Activated naive CD4-positive, alpha-beta T cell treated with anti-CD3 and anti-CD28 coated beads for 36 hours (primary cell): ENCODE measurements at regions of chr2 and their contacts with region 1.

Region 1: DNA sequence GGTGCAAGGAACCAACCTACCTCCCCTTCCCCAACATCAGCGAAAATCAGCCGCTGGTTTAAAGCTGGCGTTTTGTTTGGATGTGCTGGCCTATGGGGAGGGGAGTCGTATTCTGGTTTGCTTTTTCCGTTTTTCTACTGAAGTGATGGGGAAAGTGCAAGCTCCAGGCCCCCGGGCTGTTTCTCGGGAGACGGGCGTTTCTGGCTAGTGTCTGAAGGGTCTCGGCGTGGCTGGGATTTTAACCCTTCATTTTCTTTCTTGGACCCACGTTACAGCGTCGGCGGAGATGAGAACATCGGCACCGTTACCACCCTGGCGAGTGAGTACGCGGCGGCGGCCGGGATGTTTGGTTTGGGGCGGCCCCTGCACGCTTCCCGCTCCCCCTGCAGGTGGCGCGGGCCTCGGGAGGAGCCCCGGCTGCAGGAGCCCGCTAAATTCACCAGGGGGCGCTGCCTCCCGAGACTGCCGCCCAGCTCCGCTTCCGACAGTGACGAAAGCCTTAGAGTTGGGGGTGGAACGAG is 70.7 kb downstream of the PLB1 start:
- DNase-seq: peak; percentile 93
- H3K4me3 Mint-ChIP-seq: peak overlapping the region; percentile 83
- H3K27ac Mint-ChIP-seq: peak overlapping the region; percentile 71
- H3K4me1 Mint-ChIP-seq: peaks cover 8% of the 10 kb centered on the region
- H3K27me3 Mint-ChIP-seq: no peaks in the 10 kb centered on the region

Region 2: DNA sequence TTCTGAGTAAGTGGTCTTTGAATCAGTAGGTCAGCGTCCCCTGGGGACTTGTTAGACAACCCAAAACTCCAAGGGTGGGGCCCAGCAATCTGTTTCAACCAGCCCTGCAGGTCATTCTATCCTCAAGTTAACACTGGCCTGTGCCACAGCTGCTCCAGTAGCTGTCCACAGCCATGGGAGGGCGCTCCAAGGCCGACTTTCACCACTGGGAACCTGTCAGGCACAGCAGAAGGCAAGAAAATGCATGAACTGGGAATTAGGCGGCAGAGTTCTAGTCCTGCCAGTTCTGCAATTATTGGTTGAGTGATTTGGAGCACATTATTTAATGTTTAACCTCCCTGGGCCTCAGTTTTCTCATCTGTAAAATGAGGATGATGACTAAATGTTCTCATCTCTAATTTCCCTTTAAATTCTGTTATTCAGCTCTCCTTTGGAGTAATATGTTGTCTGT is 812.4 kb before region 1 on chr2:
- CTCF ChIA-PET with region 1: no interaction called
- intact Hi-C with region 1: loop called (anchors 10 kb)
- DNase-seq: peak; percentile 92
- H3K4me3 Mint-ChIP-seq: no peak overlapping the region
- H3K27ac Mint-ChIP-seq: no peak overlapping the region
- H3K4me1 Mint-ChIP-seq: no peaks in the 10 kb centered on the region
- H3K27me3 Mint-ChIP-seq: peaks cover 2% of the 10 kb centered on the region

Region 3: GRCh38 chr2:28463893-28464292 is 102.7 kb before region 1 on chr2:
- CTCF ChIA-PET with region 1: no interaction called
- intact Hi-C with region 1: no loop called
- DNase-seq: no peak
- H3K4me3 Mint-ChIP-seq: no peak overlapping the region
- H3K27ac Mint-ChIP-seq: no peak overlapping the region
- H3K4me1 Mint-ChIP-seq: peaks cover 18% of the 10 kb centered on the region
- H3K27me3 Mint-ChIP-seq: peaks cover 7% of the 10 kb centered on the region

Region 4: GRCh38 chr2:28481905-28482304 is 84.7 kb before region 1 on chr2:
- CTCF ChIA-PET with region 1: no interaction called
- intact Hi-C with region 1: no loop called
- DNase-seq: no peak
- H3K4me3 Mint-ChIP-seq: no peak overlapping the region
- H3K27ac Mint-ChIP-seq: no peak overlapping the region
- H3K4me1 Mint-ChIP-seq: no peaks in the 10 kb centered on the region
- H3K27me3 Mint-ChIP-seq: no peaks in the 10 kb centered on the region

Region 5: GRCh38 chr2:28751252-28751955 is 184.8 kb after region 1 on chr2 and contains the start of gene PPP1CB:
- CTCF ChIA-PET with region 1: interaction called, 6 read pairs
- intact Hi-C with region 1: loop called (anchors 1 kb)
- DNase-seq: peak; percentile 94
- H3K4me3 Mint-ChIP-seq: peak within 1 kb of the TSS; percentile 91
- H3K27ac Mint-ChIP-seq: peak within 1 kb of the TSS; percentile 95
- H3K4me1 Mint-ChIP-seq: peaks cover 50% of the 10 kb centered on the region
- H3K27me3 Mint-ChIP-seq: no peaks in the 10 kb centered on the region
- total RNA-seq, gene PPP1CB: 235 to 239 TPM

Region 6: DNA sequence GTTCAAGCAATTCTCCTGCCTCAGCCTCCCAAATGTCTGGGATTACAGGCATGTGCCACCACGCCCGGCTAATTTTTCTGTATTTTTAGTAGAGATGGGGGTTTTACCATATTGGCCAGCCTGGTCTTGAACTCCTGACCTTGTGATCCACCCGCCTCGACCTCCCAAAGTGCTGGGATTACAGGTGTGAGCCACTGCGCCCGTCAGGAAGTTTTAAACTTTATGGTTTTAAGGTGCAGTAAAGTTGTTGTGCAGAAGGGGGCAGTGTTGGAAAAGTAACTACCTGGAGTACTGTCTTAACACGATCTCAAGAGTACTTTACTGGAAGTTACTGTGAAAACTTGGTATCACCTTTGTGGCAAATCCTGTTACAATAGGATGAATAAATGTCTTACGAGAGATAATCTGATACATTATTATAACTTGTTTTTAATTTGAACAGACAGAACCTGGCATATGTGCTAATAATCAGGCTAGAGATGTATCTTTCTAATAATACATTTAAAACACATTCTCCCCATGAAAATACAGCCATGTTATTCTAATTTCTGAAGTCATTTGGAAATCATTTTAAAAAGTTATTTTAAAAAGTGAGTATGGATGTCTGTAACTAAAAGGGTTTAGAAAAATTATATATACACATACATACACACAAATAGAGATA is 254.8 kb after region 1 on chr2:
- CTCF ChIA-PET with region 1: interaction called, 4 read pairs
- intact Hi-C with region 1: loop called (anchors 1 kb)
- DNase-seq: peak; percentile 81
- H3K4me3 Mint-ChIP-seq: no peak overlapping the region
- H3K27ac Mint-ChIP-seq: no peak overlapping the region
- H3K4me1 Mint-ChIP-seq: peaks cover 8% of the 10 kb centered on the region
- H3K27me3 Mint-ChIP-seq: no peaks in the 10 kb centered on the region

Region 7: GRCh38 chr2:28894470-28895177 is 328.0 kb after region 1 on chr2 and contains the start of gene WDR43:
- CTCF ChIA-PET with region 1: interaction called, 4 read pairs
- intact Hi-C with region 1: loop called (anchors 1 kb)
- DNase-seq: peak; percentile 97
- H3K4me3 Mint-ChIP-seq: peak within 1 kb of the TSS; percentile 100
- H3K27ac Mint-ChIP-seq: peak within 1 kb of the TSS; percentile 97
- H3K4me1 Mint-ChIP-seq: peaks cover 34% of the 10 kb centered on the region
- H3K27me3 Mint-ChIP-seq: no peaks in the 10 kb centered on the region
- total RNA-seq, gene WDR43: 76.5 to 78.7 TPM

Region 8: DNA sequence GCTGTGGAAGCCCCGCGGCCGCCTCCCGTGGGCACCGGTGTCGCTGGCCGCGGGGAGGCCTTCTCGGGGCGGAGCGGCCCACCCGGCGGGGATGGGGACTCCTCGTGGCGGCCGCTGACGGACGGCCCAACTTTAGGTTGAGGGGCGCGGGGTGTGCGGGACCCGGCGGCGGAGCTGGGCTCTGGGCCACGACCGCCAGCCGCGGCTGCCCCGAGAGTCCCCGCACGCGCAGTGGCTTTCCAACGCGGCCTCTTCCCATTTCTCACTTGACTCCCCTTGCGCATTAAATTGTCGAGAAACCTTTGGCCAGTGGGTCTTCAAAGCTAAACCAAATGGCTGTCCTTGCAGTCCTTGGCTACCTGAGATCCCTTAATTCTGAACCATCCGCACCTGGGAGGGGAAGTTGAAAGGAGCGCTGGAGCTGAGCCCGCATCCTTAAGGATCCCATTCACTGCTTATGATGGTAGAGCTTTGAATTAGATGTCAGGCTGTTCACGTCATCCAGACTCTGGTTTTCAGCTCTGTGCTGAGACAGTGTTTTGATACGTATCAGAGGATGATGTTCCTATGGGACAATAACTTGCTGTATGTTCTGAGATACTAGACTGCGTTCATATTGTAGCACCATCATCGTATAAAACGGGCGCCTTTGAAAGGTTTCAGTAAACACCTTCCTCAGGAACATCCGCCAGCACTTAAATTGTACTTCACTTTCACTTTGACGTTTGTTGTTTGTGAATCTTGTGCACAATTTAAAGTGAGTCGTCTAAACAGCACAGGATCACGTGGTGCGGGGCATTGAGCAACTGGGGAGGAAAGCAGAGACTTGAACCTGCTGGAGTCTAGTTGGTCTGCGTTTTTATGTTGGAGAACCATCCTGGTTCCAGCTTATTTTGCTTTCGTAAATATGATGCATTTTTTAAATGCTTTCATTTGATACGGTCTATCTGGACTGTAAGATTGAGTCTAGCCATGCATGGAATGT is 549.5 kb after region 1 on chr2:
- CTCF ChIA-PET with region 1: no interaction called
- intact Hi-C with region 1: loop called (anchors 5 kb)
- DNase-seq: peak; percentile 90
- H3K4me3 Mint-ChIP-seq: peak overlapping the region; percentile 90
- H3K27ac Mint-ChIP-seq: peak overlapping the region; percentile 87
- H3K4me1 Mint-ChIP-seq: peaks cover 52% of the 10 kb centered on the region
- H3K27me3 Mint-ChIP-seq: peaks cover 3% of the 10 kb centered on the region